Activated CD8-positive, alpha-beta T cell treated with anti-CD3 and anti-CD28 coated beads, Interleukin-2, amount 10 ng/mL, durations not matched to agents 7 days and 5 days (primary cell): ENCODE measurements at regions of chr14 and their contacts with region 1.

Region 1: GRCh38 chr14:51979088-51979709 is 10.1 kb upstream of the RTRAF start:
- DNase-seq: peak; percentile 89
- ATAC-seq: peak; percentile 77
- H3K4me3 Mint-ChIP-seq: no peak overlapping the region
- H3K27ac Mint-ChIP-seq: no peak overlapping the region
- H3K4me1 Mint-ChIP-seq: peaks cover 18% of the 10 kb centered on the region
- H3K27me3 Mint-ChIP-seq: no peaks in the 10 kb centered on the region

Region 2: GRCh38 chr14:51704545-51704944 is 274.7 kb before region 1 on chr14:
- CTCF ChIA-PET with region 1: no interaction called
- POLR2A ChIA-PET with region 1: no interaction called
- DNase-seq: no peak
- ATAC-seq: no peak
- H3K4me3 Mint-ChIP-seq: no peak overlapping the region
- H3K27ac Mint-ChIP-seq: no peak overlapping the region
- H3K4me1 Mint-ChIP-seq: no peaks in the 10 kb centered on the region
- H3K27me3 Mint-ChIP-seq: peaks cover 4% of the 10 kb centered on the region

Region 3: DNA sequence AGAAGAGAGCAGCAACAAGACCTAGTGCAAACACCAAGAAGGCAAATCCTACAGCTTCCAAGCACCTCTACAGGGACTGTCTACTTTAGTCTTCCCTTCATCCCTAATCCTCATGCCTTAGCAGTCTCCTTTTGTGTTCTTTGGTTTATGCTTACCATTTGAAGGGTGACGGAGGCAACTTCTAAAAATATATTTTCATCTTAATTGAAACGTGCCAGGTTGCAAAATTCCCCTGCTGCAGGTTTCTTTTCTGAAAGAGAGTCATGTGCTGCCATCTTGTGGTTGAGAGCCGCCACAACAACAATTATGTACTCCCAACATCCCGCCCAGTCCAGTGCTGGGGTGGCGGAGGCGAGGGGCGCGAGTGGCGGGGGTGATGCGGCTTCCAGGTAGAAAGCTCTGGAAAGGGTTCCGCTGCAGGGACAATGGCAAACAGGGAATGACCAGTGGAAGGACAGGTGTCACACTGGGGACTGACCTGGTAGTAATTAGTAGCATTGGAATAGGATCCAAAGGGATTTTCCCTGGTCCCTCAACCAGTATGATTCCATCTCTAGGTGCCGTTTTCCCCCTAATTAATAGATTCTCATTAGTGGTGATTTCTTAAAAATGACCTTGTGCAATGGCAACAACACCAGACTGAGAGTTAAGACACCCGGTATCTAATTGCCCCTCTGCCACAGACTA is 199.1 kb before region 1 on chr14:
- CTCF ChIA-PET with region 1: interaction called, 29 read pairs
- POLR2A ChIA-PET with region 1: no interaction called
- DNase-seq: peak; percentile 81
- ATAC-seq: peak; percentile 73
- H3K4me3 Mint-ChIP-seq: no peak overlapping the region
- H3K27ac Mint-ChIP-seq: no peak overlapping the region
- H3K4me1 Mint-ChIP-seq: peaks cover 12% of the 10 kb centered on the region
- H3K27me3 Mint-ChIP-seq: peaks cover 20% of the 10 kb centered on the region

Region 4: DNA sequence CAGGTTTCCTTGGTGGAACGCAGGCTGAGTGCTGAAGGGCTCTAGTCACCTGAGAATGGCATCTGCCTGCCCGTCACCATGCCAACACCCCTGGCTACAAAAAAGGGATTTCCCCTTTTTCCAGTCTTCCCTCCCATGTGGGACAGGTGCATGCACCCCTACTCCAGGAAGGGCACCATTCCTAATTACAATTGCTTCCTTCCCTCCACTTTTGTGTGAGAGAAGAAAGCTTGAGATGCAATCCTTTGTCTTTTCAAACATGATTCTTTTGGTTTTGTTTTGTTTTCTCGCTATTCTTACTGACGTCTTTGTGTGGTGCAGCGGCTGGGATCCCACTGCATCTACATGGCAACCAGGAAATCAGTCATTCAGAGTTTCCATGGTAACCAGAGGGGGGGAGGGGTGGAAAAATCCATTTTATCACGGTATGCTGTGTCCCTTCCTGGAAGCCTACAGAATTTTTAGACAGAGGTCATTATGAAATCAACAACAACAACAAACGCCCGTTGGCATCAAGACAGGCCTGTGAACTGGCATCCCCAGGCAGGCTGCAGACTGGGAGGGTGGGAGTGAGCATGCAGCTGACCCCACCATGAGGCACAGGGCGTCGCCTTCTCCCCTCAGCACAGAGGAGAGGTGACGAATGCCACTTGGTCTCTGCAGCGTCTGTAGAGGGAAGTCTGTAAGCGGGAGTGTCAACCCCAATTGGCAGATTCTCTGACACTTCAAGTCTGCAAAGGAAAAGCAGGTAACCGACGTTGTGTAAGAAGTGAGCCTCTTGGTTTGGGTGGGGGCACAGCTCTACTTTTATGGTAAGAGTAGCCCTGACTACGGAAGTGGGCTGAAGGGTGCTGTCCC is 132.3 kb before region 1 on chr14:
- CTCF ChIA-PET with region 1: interaction called, 12 read pairs
- POLR2A ChIA-PET with region 1: no interaction called
- DNase-seq: peak; percentile 96
- ATAC-seq: peak; percentile 89
- H3K4me3 Mint-ChIP-seq: peak overlapping the region; percentile 73
- H3K27ac Mint-ChIP-seq: peak overlapping the region; percentile 96
- H3K4me1 Mint-ChIP-seq: peaks cover 74% of the 10 kb centered on the region
- H3K27me3 Mint-ChIP-seq: no peaks in the 10 kb centered on the region

Region 5: GRCh38 chr14:51865953-51866747 is 113.0 kb before region 1 on chr14:
- CTCF ChIA-PET with region 1: interaction called, 26 read pairs
- POLR2A ChIA-PET with region 1: interaction called, 6 read pairs
- DNase-seq: no peak
- ATAC-seq: peak; percentile 38
- H3K4me3 Mint-ChIP-seq: no peak overlapping the region
- H3K27ac Mint-ChIP-seq: no peak overlapping the region
- H3K4me1 Mint-ChIP-seq: peaks cover 23% of the 10 kb centered on the region
- H3K27me3 Mint-ChIP-seq: no peaks in the 10 kb centered on the region

Region 6: GRCh38 chr14:52182853-52183252 is 203.7 kb after region 1 on chr14:
- CTCF ChIA-PET with region 1: no interaction called
- POLR2A ChIA-PET with region 1: no interaction called
- DNase-seq: no peak
- ATAC-seq: no peak
- H3K4me3 Mint-ChIP-seq: no peak overlapping the region
- H3K27ac Mint-ChIP-seq: no peak overlapping the region
- H3K4me1 Mint-ChIP-seq: peaks cover 2% of the 10 kb centered on the region
- H3K27me3 Mint-ChIP-seq: no peaks in the 10 kb centered on the region

Region 7: DNA sequence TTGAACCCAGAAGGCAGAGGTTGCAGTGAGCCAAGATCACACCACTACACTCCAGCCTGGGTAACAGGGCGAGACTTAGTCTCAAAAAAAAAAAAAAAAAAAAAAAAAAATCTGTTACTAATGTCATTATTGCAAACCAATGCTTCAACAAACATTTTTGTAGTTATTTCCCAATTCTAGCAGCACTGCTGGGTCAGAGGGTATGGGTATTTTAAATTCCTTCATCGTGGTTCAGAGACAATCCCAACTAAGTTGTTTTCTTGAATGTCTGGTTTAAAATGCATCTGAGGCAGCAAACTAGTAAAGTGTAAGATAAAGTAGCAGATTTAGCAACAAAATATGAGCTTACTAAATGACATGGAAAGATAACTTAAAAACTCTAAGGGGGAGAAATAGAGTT is 906.0 kb after region 1 on chr14:
- CTCF ChIA-PET with region 1: no interaction called
- POLR2A ChIA-PET with region 1: no interaction called
- DNase-seq: no peak
- ATAC-seq: no peak
- H3K4me3 Mint-ChIP-seq: no peak overlapping the region
- H3K27ac Mint-ChIP-seq: no peak overlapping the region
- H3K4me1 Mint-ChIP-seq: no peaks in the 10 kb centered on the region
- H3K27me3 Mint-ChIP-seq: no peaks in the 10 kb centered on the region